Left cardiac atrium (tissue), 4 donors: ENCODE measurements at regions of chr11 and their contacts with region 1.

Region 1: DNA sequence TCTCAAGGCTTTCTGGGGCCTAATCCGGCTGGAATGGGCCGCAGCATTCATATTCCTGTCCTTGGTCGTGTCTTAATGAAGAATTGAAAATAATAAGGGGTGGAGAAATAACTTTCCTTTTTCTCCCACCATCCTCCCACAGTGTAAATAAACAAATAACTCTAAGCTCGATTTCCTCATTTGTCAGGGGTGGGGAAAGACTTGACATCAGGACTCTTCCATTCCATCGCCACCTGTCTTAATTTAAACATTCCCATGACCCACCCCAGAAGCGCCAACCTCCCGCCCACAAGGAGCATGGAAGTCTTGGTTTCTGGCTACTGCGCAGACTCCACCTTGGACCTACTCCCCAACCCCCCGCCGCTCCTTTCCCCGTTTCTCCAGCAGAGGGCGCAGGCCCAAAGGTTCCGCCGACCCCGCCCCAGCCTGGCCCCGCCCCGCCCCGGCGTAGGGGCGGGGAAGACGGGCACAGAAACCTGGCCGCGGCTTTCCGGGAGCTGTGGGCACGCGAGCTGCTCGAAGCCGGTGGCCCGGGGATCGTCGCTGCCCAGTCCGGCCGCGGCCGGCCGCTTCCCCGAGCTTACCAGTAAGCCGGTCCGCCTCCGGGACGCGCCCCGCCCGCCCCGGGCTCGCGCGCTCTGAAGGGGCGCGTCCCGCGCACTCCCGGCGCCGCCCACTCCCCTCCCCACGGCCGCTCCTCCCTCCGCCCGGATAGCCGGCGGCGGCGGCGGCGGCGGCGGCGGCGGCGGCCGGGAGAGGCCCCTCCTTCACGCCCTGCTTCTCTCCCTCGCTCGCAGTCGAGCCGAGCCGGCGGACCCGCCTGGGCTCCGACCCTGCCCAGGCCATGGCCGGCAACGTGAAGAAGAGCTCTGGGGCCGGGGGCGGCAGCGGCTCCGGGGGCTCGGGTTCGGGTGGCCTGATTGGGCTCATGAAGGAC is at the start of gene CBL:
- DNase-seq: peak; percentile 95
- ATAC-seq: peak; percentile 97 to 98
- total RNA-seq, gene CBL: 11.1 to 13.8 TPM

Region 2: DNA sequence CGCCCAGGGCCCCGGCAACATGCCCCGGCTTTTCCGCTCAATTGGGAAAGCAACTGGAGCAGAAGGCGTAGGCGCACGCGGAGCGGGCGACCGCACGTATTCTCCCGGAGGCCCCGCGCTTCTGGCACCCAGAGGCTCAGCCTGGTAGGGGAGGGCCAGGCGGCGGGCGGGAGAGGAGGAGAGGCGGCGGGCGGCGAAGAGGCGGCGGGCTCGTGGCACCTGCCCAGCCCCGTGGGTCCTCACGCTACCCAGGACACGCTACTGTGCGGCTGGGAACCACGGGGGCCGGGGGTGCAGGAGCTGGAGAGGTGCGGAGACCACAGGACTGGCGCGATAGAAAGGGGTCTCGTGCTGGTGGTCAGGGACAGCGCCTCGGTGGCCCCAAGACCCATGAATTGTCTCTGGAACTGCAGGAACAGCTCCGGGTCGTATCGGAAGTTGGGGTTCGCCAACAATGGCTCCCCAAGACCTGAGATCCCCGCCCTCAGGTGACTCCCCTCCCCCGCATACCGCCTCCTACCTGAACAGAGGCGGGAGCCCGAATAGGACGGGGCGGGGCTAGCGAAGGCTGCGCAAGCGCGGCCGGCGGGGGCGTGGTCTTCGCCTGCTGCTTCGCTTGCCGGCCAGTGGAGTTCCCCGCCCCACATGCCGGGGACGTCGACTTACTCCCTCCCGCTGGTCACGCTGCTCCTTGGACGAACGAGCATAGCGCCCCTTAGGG is 175.4 kb before region 1 on chr11 and contains the start of gene SLC37A4:
- intact Hi-C with region 1: no loop called
- DNase-seq: peak; percentile 98
- ATAC-seq: peak; percentile 96 to 98
- total RNA-seq, gene SLC37A4: 7.2 to 8.4 TPM

Region 3: DNA sequence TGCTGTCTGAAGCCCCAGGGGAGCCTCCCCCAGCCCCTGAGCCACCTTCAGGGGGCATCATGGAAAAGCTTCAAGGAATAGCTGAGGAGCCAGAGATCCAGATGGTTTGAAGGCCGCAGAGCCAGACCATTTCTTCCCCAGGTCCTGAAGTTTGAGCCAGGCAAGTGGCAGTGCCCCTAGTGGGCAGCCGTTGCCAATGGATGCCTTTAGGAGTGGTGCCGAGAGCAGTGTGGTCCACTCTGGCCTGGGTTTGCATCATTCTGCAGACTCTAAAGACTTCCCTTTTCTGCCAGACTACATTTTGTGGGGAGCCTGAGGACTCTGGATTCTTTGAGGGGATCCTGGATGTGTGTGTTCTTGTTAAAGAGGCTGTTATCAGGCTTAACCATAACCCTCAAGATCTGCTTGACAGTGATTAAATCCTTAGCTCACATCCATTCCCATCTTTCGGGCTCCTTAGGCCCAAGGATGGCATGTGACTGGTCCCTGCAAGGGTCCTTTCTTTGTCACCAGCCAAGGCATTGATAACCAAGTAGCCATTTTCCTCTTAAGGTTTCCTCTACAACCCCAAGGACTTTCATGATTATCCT is 71.4 kb before region 1 on chr11:
- intact Hi-C with region 1: no loop called
- DNase-seq: no peak
- ATAC-seq: peak in 1 of 2 donors; percentile 46

Region 4: GRCh38 chr11:119284344-119285157 is 78.7 kb after region 1 on chr11:
- intact Hi-C with region 1: loop called in 1 of 2 experiments (anchors 10 kb)
- DNase-seq: no peak
- ATAC-seq: peak; percentile 68 to 82

Region 5: DNA sequence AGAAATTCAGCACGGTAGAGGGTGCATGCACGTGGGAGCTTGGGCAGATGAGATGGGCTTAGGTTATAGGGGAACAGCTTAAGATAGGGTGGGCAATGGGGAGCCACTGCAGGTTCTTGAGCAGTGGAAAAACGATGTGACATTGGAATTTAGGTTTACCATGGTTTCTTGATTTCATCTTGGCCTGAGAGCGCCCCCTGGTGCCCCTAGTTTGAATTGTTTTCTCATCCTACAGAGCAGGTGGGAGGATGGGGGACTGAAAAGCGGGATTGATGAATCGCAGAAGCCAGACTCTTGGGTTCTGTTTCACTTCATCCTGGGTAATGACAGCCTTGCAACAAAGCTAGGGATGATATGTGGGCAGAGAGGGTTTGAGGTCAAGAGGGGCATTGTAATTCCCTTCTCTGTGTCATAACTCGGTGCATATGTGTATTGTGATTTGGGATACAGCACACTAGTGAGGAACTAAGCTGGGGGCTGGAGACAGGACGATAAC is 117.7 kb after region 1 on chr11:
- intact Hi-C with region 1: loop called (anchors 5 to 10 kb)
- DNase-seq: peak; percentile 77
- ATAC-seq: no peak